Naive thymus-derived CD8-positive, alpha-beta T cell (primary cell): ENCODE measurements at regions of chr5 and their contacts with region 1.

Region 1: DNA sequence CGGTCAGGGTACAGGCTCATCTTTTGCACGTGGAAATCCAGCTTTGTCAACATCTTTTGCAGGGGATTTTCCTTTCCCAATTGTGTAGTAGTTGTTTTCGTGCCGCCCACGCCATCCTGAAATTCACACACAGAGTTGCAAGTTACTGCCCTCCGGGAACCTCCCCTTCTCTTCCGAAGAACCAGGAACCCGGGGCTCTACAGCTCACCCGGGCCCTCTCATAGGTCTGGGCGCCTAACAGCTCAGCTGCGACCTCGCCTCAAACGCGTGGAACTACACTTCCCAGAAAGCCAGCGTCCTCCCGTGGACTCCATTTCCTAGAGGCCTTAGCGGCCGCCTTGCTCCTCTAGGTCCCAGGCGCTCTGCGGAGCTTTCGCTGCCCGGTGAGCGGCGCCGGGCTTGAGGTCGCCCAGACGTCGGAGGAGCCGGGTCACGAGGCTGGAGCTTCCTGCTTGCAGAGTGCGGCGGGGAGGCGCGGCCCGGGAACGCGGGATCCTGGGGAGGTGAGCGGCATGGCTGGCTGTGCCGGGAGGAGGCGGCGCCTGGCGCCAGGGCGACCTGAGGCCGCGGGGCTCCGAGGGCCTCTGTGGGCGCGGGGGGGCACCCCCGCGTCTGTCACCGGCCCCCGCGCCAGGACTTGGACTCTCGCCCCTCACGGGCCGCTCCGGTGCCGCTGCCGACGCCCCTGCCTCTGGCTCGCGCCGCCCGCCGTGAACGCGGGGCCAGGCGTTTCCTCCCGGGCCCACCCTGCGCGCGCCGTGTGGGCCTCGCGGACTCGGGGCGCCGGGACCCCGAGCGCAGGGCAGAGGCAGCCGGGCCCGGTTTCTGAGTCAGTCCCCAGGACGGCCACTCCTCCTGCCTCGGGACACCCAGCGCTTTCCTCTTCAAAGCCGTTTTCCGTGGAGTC is at the start of gene ZNF354B:
- DNase-seq: peak; percentile 60 to 91 (median 82)
- ATAC-seq: peak; percentile 95 to 96
- H3K4me3 Mint-ChIP-seq: peak within 1 kb of the TSS; percentile 83 to 96 (median 90)
- H3K27ac Mint-ChIP-seq: peak within 1 kb of the TSS; percentile 80 to 97 (median 91)
- H3K4me1 Mint-ChIP-seq: peaks cover 16 to 34% (median 29%) of the 10 kb centered on the region in 4 donors
- H3K27me3 Mint-ChIP-seq: peaks cover 0 to 10% (median 0%) of the 10 kb centered on the region in 5 donors
- polyA plus RNA-seq, gene ZNF354B: 3.3 to 5.9 (median 3.5) TPM

Region 2: GRCh38 chr5:178699681-178700253 is 160.1 kb before region 1 on chr5:
- POLR2A ChIA-PET with region 1: no interaction called
- DNase-seq: no peak
- ATAC-seq: no peak
- H3K4me3 Mint-ChIP-seq: no peak overlapping the region
- H3K27ac Mint-ChIP-seq: peak overlapping the region in 1 of 10 donors; percentile 22
- H3K4me1 Mint-ChIP-seq: peaks cover 0 to 1% (median 0%) of the 10 kb centered on the region in 4 donors
- H3K27me3 Mint-ChIP-seq: peaks cover 0 to 17% (median 0%) of the 10 kb centered on the region in 5 donors

Region 3: DNA sequence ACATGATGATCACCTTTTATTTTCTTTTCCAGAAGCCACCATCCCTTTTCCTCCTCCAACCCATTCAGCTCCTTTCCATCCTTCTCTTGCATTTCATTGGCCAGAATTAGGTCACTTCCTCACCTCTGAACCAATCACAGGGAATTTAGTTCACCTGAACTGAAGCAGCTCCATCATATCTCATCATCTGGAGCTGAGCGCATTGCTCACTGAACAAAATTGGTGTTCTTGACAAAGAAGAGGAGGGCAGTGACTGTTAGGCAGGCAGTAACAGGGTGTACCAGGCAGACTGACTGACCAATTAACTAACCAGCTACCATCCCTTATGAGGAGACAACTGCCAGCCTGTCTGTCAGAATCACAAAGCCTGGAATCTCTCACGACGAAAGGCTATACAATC is 127.6 kb before region 1 on chr5:
- POLR2A ChIA-PET with region 1: interaction called, 19 read pairs
- DNase-seq: no peak
- ATAC-seq: no peak
- H3K4me3 Mint-ChIP-seq: peak overlapping the region in 2 of 10 donors; percentile 13 to 32
- H3K27ac Mint-ChIP-seq: peak overlapping the region in 2 of 10 donors; percentile 58 to 72
- H3K4me1 Mint-ChIP-seq: peaks cover 4 to 14% (median 8%) of the 10 kb centered on the region in 4 donors
- H3K27me3 Mint-ChIP-seq: peaks cover 0 to 1% (median 0%) of the 10 kb centered on the region in 5 donors

Region 4: DNA sequence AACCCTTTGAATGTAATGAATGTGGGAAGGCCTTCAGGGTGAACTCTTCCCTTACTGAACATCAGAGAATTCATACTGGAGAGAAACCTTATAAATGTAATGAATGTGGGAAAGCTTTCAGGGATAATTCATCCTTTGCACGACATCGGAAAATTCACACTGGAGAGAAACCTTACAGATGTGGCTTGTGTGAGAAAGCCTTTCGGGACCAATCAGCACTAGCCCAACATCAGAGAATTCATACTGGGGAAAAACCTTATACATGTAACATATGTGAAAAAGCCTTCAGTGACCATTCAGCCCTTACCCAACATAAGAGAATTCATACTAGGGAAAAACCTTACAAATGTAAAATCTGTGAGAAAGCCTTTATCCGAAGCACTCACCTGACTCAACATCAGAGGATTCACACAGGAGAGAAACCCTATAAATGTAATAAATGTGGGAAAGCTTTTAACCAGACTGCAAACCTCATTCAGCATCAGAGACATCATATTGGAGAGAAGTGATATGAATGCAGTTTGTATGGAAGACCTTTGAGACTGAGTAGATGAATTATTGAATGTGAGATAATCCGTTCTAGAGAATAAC is 105.7 kb after region 1 on chr5:
- POLR2A ChIA-PET with region 1: no interaction called
- DNase-seq: no peak
- ATAC-seq: no peak
- H3K4me3 Mint-ChIP-seq: peak overlapping the region in 1 of 10 donors; percentile 26
- H3K27ac Mint-ChIP-seq: no peak overlapping the region
- H3K4me1 Mint-ChIP-seq: no peaks in the 10 kb centered on the region
- H3K27me3 Mint-ChIP-seq: peaks cover 0 to 1% (median 0%) of the 10 kb centered on the region in 5 donors